CD8-positive, alpha-beta T cell (primary cell): ENCODE measurements at regions of chr6 and their contacts with region 1.

Region 1: GRCh38 chr6:139134817-139135581 is at the start of gene HECA:
- DNase-seq: peak; percentile 98 to 100 (median 99)
- ATAC-seq: peak; percentile 81
- H3K4me3 ChIP-seq: peak within 1 kb of the TSS; percentile 79 to 84
- H3K4me3 Mint-ChIP-seq: peak within 1 kb of the TSS; percentile 91
- H3K27ac ChIP-seq: peak within 1 kb of the TSS; percentile 96 to 97
- H3K27ac Mint-ChIP-seq: peak within 1 kb of the TSS; percentile 98
- H3K4me1 ChIP-seq: peaks cover 55% of the 10 kb centered on the region
- H3K4me1 Mint-ChIP-seq: peaks cover 67% of the 10 kb centered on the region
- H3K27me3 ChIP-seq: no peaks in the 10 kb centered on the region
- H3K27me3 Mint-ChIP-seq: no peaks in the 10 kb centered on the region
- CTCF ChIP-seq: no peak
- total RNA-seq, gene HECA: 231 to 234 TPM

Region 2: GRCh38 chr6:138403801-138404661 is 731.0 kb before region 1 on chr6 and contains the start of gene HEBP2:
- CTCF ChIA-PET with region 1: no interaction called
- POLR2A ChIA-PET with region 1: no interaction called
- intact Hi-C with region 1: loop called in 1 of 2 experiments (anchors 10 kb)
- DNase-seq: peak; percentile 85 to 96 (median 93)
- ATAC-seq: peak; percentile 91
- H3K4me3 ChIP-seq: peak within 1 kb of the TSS; percentile 63 to 85
- H3K4me3 Mint-ChIP-seq: peak within 1 kb of the TSS; percentile 90
- H3K27ac ChIP-seq: peak within 1 kb of the TSS; percentile 63 to 85
- H3K27ac Mint-ChIP-seq: peak within 1 kb of the TSS; percentile 97
- H3K4me1 ChIP-seq: peaks cover 15% of the 10 kb centered on the region
- H3K4me1 Mint-ChIP-seq: peaks cover 23% of the 10 kb centered on the region
- H3K27me3 ChIP-seq: no peaks in the 10 kb centered on the region
- H3K27me3 Mint-ChIP-seq: no peaks in the 10 kb centered on the region
- CTCF ChIP-seq: peak; percentile 23
- total RNA-seq, gene HEBP2: 64.6 to 69.1 TPM

Region 3: DNA sequence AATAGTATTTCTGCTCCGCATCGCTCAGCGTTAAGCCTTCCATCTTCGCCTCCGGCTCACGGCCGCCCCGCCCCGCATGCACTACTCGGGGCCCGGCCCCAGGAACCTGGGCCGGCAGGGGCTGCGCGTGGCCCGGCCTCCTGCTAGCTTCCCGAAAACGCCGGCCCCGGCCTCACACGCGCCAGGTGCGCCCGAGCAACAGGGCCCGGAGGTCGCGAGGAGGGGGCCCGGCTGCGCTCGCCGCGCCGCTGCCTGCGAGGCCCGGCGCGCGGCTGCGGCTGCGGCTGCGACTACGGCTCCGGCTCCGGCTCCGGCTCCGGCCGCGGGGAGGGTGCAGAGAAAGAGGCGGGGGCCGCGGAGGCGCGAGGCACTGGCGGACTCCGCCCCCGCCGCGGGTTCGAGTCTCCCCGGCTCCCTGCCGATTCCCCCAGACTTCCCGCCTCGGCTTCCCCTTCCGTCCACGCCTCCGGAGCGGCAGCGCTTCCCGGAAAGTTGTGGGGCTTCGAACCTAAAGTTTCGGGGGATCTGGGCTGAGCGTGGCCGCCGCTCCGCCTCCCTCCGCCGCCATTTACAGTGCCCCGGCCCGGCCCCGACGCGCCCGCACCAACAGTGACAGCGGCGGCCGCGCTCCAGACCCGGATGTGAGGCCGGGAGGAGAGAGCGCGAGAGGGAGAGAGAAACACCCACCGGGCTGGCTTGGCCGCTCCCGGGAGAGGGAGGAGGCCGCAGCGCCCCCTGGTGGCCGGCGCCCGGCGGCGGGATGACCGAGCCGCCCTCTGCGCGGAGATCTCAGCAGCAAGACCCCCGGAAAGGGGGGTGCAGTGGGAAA is 147.1 kb before region 1 on chr6 and contains the start of gene REPS1:
- CTCF ChIA-PET with region 1: interaction called, 7 read pairs
- POLR2A ChIA-PET with region 1: interaction called, 5 read pairs
- intact Hi-C with region 1: loop called in 1 of 2 experiments (anchors 5 kb)
- DNase-seq: peak; percentile 79 to 97 (median 90)
- ATAC-seq: peak; percentile 88
- H3K4me3 ChIP-seq: peak within 1 kb of the TSS; percentile 74 to 79
- H3K4me3 Mint-ChIP-seq: peak within 1 kb of the TSS; percentile 86
- H3K27ac ChIP-seq: peak within 1 kb of the TSS; percentile 68 to 81
- H3K27ac Mint-ChIP-seq: peak within 1 kb of the TSS; percentile 85
- H3K4me1 ChIP-seq: peaks cover 42% of the 10 kb centered on the region
- H3K4me1 Mint-ChIP-seq: peaks cover 6% of the 10 kb centered on the region
- H3K27me3 ChIP-seq: no peaks in the 10 kb centered on the region
- H3K27me3 Mint-ChIP-seq: no peaks in the 10 kb centered on the region
- CTCF ChIP-seq: peak; percentile 99
- total RNA-seq, gene REPS1: 50.4 to 60.3 TPM

Region 4: GRCh38 chr6:139146317-139146726 is 11.3 kb after region 1 on chr6:
- CTCF ChIA-PET with region 1: interaction called, 7 read pairs
- POLR2A ChIA-PET with region 1: interaction called, 17 read pairs
- intact Hi-C with region 1: loop called in 1 of 2 experiments (anchors 1 kb)
- DNase-seq: no peak
- ATAC-seq: peak; percentile 21
- H3K4me3 ChIP-seq: peak overlapping the region in 1 of 2 experiments; percentile 11
- H3K4me3 Mint-ChIP-seq: peak overlapping the region; percentile 71
- H3K27ac ChIP-seq: peak overlapping the region in 1 of 2 experiments; percentile 57
- H3K27ac Mint-ChIP-seq: peak overlapping the region; percentile 62
- H3K4me1 ChIP-seq: peaks cover 89% of the 10 kb centered on the region
- H3K4me1 Mint-ChIP-seq: peaks cover 91% of the 10 kb centered on the region
- H3K27me3 ChIP-seq: no peaks in the 10 kb centered on the region
- H3K27me3 Mint-ChIP-seq: no peaks in the 10 kb centered on the region
- CTCF ChIP-seq: no peak

Region 5: GRCh38 chr6:139173172-139173571 is 38.2 kb after region 1 on chr6:
- CTCF ChIA-PET with region 1: interaction called, 10 read pairs
- POLR2A ChIA-PET with region 1: interaction called, 8 read pairs
- intact Hi-C with region 1: loop called (anchors 1 kb)
- DNase-seq: peak in 4 of 9 experiments; percentile 32 to 74 (median 50)
- ATAC-seq: peak; percentile 84
- H3K4me3 ChIP-seq: no peak overlapping the region
- H3K4me3 Mint-ChIP-seq: peak overlapping the region; percentile 40
- H3K27ac ChIP-seq: peak overlapping the region in 1 of 2 experiments; percentile 34
- H3K27ac Mint-ChIP-seq: peak overlapping the region; percentile 80
- H3K4me1 ChIP-seq: peaks cover 92% of the 10 kb centered on the region
- H3K4me1 Mint-ChIP-seq: peaks cover 93% of the 10 kb centered on the region
- H3K27me3 ChIP-seq: no peaks in the 10 kb centered on the region
- H3K27me3 Mint-ChIP-seq: no peaks in the 10 kb centered on the region
- CTCF ChIP-seq: no peak

Region 6: GRCh38 chr6:139323511-139324300 is 188.7 kb after region 1 on chr6:
- CTCF ChIA-PET with region 1: no interaction called
- POLR2A ChIA-PET with region 1: interaction called, 5 read pairs
- intact Hi-C with region 1: loop called in 1 of 2 experiments (anchors 1 kb)
- DNase-seq: peak; percentile 56 to 91 (median 84)
- ATAC-seq: peak; percentile 87
- H3K4me3 ChIP-seq: peak overlapping the region; percentile 54 to 59
- H3K4me3 Mint-ChIP-seq: peak overlapping the region; percentile 89
- H3K27ac ChIP-seq: peak overlapping the region; percentile 82 to 97
- H3K27ac Mint-ChIP-seq: peak overlapping the region; percentile 97
- H3K4me1 ChIP-seq: peaks cover 18% of the 10 kb centered on the region
- H3K4me1 Mint-ChIP-seq: peaks cover 35% of the 10 kb centered on the region
- H3K27me3 ChIP-seq: no peaks in the 10 kb centered on the region
- H3K27me3 Mint-ChIP-seq: no peaks in the 10 kb centered on the region
- CTCF ChIP-seq: no peak

Region 7: DNA sequence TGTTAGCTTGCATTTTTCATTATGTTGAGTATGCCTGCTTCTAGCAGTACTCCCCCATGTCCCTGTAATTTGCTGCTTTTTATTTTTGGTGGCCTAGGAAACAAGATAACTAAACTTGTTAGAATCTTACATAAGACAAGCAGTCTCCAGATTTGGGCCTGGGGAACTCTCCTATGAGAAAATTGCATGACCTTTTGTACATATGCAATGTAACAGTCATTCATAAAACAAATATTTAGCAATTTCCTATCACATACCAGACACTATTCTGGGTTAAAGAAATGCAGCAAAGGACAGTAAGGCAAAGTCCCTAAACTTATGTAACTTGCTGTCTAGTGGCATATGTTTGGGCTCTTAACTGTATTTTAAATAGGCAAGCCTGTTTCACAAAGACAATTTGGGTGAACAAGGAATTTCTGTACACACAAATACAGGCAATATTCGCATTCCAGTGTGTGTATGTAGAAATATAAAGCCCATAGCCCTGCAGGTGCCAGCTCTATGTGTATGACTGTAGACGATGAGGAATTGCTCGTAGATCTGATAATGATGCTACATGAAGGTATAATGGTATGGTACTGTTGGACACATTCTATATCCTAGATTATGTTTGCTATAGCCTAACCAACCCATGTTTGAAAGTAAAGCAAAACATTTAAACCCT is 544.6 kb after region 1 on chr6:
- CTCF ChIA-PET with region 1: no interaction called
- POLR2A ChIA-PET with region 1: no interaction called
- intact Hi-C with region 1: no loop called
- DNase-seq: no peak
- ATAC-seq: no peak
- H3K4me3 ChIP-seq: no peak overlapping the region
- H3K4me3 Mint-ChIP-seq: no peak overlapping the region
- H3K27ac ChIP-seq: no peak overlapping the region
- H3K27ac Mint-ChIP-seq: no peak overlapping the region
- H3K4me1 ChIP-seq: no peaks in the 10 kb centered on the region
- H3K4me1 Mint-ChIP-seq: no peaks in the 10 kb centered on the region
- H3K27me3 ChIP-seq: no peaks in the 10 kb centered on the region
- H3K27me3 Mint-ChIP-seq: no peaks in the 10 kb centered on the region
- CTCF ChIP-seq: no peak